ENCODE measurements at regions of chr20 and their contacts with region 1.

Region 1: GRCh38 chr20:5090191-5090590 is 29.6 kb downstream of the PCNA start:
- DNase-seq: no peak
- H3K4me3 ChIP-seq: no peak overlapping the region
- H3K27ac ChIP-seq: peak overlapping the region in 3 of 4 donors; percentile 42 to 57 (median 42)
- H3K4me1 ChIP-seq: peaks cover 0 to 13% (median 3%) of the 10 kb centered on the region in 4 donors
- H3K27me3 ChIP-seq: no peaks in the 10 kb centered on the region
- CTCF ChIP-seq: no peak
- EP300 ChIP-seq: no peak
- POLR2A ChIP-seq: peak; percentile 23

Region 2: DNA sequence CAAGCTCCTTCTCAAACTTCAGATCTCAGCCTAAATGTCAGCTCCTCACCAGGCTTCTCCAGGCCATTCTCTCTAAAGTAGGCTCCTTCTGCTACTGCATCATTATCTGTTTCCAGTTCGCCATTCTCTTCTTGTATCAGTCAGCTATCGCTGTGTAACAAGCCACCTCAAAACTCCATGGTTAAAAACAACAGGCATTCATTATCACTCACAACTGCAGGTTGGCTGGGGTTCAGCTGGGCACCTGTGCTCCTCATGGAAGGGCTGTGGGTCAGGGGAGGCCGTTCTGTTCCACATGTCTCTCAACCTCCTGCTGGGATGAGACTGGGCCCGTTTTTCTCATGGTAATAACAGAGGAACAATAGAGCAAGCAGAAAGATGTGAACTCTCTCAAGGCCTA is 339.8 kb before region 1 on chr20:
- in situ Hi-C with region 1: loop called in 1 of 4 experiments (anchors 10 kb)
- intact Hi-C with region 1: no loop called
- DNase-seq: no peak
- H3K4me3 ChIP-seq: no peak overlapping the region
- H3K27ac ChIP-seq: no peak overlapping the region
- H3K4me1 ChIP-seq: no peaks in the 10 kb centered on the region
- H3K27me3 ChIP-seq: no peaks in the 10 kb centered on the region
- CTCF ChIP-seq: no peak
- EP300 ChIP-seq: no peak
- POLR2A ChIP-seq: no peak

Region 3: GRCh38 chr20:5316188-5317158 is 226.3 kb after region 1 on chr20 and contains the start of gene PROKR2:
- in situ Hi-C with region 1: no loop called
- intact Hi-C with region 1: no loop called
- DNase-seq: no peak
- H3K4me3 ChIP-seq: no peak within 1 kb of the TSS
- H3K27ac ChIP-seq: no peak within 1 kb of the TSS
- H3K4me1 ChIP-seq: no peaks in the 10 kb centered on the region
- H3K27me3 ChIP-seq: peaks cover 41% of the 10 kb centered on the region
- CTCF ChIP-seq: no peak
- EP300 ChIP-seq: no peak
- POLR2A ChIP-seq: no peak
- total RNA-seq, gene PROKR2: not detected